CD4-positive, alpha-beta T cell (primary cell): ENCODE measurements at regions of chrX and their contacts with region 1.

Region 1: GRCh38 chrX:153507484-153508178 is 9.8 kb upstream of the ATP2B3 start:
- DNase-seq: peak; percentile 73 to 89 (median 80)
- ATAC-seq: peak; percentile 100
- H3K4me3 ChIP-seq: no peak overlapping the region
- H3K4me3 Mint-ChIP-seq: no peak overlapping the region
- H3K27ac ChIP-seq: no peak overlapping the region
- H3K27ac Mint-ChIP-seq: no peak overlapping the region
- H3K4me1 ChIP-seq: peaks cover 9% of the 10 kb centered on the region
- H3K4me1 Mint-ChIP-seq: no peaks in the 10 kb centered on the region
- H3K27me3 ChIP-seq: no peaks in the 10 kb centered on the region
- H3K27me3 Mint-ChIP-seq: no peaks in the 10 kb centered on the region
- CTCF ChIP-seq: peak; percentile 66

Region 2: GRCh38 chrX:153032397-153033118 is 475.1 kb before region 1 on chrX:
- CTCF ChIA-PET with region 1: interaction called, 12 read pairs
- POLR2A ChIA-PET with region 1: no interaction called
- intact Hi-C with region 1: loop called (anchors 1 to 2 kb)
- DNase-seq: peak; percentile 18 to 84 (median 58)
- ATAC-seq: peak; percentile 72
- H3K4me3 ChIP-seq: peak overlapping the region; percentile 59
- H3K4me3 Mint-ChIP-seq: peak overlapping the region; percentile 84
- H3K27ac ChIP-seq: peak overlapping the region in 1 of 2 donors; percentile 29
- H3K27ac Mint-ChIP-seq: peak overlapping the region; percentile 80
- H3K4me1 ChIP-seq: peaks cover 25% of the 10 kb centered on the region
- H3K4me1 Mint-ChIP-seq: peaks cover 5% of the 10 kb centered on the region
- H3K27me3 ChIP-seq: no peaks in the 10 kb centered on the region
- H3K27me3 Mint-ChIP-seq: no peaks in the 10 kb centered on the region
- CTCF ChIP-seq: peak; percentile 70

Region 3: DNA sequence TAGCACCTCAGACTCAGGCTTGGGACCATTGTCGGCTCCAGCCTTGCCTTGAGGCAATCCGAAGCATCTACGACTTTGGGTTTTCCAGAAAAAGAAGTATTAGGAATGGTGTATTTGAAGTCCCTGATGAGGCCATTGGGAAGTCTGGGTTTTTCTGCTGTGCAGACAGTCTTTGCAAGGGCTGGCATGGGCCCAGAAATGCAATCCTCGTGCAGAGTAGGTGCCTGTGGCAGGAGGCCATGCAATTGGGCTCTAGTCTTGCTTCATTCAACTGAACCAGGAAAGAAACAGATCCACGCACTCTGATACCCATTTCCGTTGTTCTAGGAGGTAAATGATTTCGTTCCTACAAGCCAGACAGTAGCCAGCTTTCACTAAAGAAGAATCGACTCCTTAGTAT is 84.0 kb before region 1 on chrX:
- CTCF ChIA-PET with region 1: no interaction called
- POLR2A ChIA-PET with region 1: no interaction called
- intact Hi-C with region 1: no loop called
- DNase-seq: no peak
- ATAC-seq: no peak
- H3K4me3 ChIP-seq: no peak overlapping the region
- H3K4me3 Mint-ChIP-seq: no peak overlapping the region
- H3K27ac ChIP-seq: no peak overlapping the region
- H3K27ac Mint-ChIP-seq: no peak overlapping the region
- H3K4me1 ChIP-seq: no peaks in the 10 kb centered on the region
- H3K4me1 Mint-ChIP-seq: no peaks in the 10 kb centered on the region
- H3K27me3 ChIP-seq: no peaks in the 10 kb centered on the region
- H3K27me3 Mint-ChIP-seq: no peaks in the 10 kb centered on the region
- CTCF ChIP-seq: no peak

Region 4: GRCh38 chrX:153460845-153461244 is 46.8 kb before region 1 on chrX:
- CTCF ChIA-PET with region 1: interaction called, 7 read pairs
- POLR2A ChIA-PET with region 1: no interaction called
- intact Hi-C with region 1: loop called in 1 of 2 experiments (anchors 2 kb)
- DNase-seq: peak in 13 of 14 experiments; percentile 35 to 68 (median 44)
- ATAC-seq: peak; percentile 44
- H3K4me3 ChIP-seq: no peak overlapping the region
- H3K4me3 Mint-ChIP-seq: no peak overlapping the region
- H3K27ac ChIP-seq: no peak overlapping the region
- H3K27ac Mint-ChIP-seq: no peak overlapping the region
- H3K4me1 ChIP-seq: no peaks in the 10 kb centered on the region
- H3K4me1 Mint-ChIP-seq: no peaks in the 10 kb centered on the region
- H3K27me3 ChIP-seq: no peaks in the 10 kb centered on the region
- H3K27me3 Mint-ChIP-seq: no peaks in the 10 kb centered on the region
- CTCF ChIP-seq: peak; percentile 48

Region 5: GRCh38 chrX:153470435-153471363 is 36.9 kb before region 1 on chrX and contains the start of gene HAUS7:
- CTCF ChIA-PET with region 1: interaction called, 28 read pairs
- POLR2A ChIA-PET with region 1: no interaction called
- intact Hi-C with region 1: loop called (anchors 1 kb)
- DNase-seq: peak; percentile 81 to 95 (median 86)
- ATAC-seq: peak; percentile 83
- H3K4me3 ChIP-seq: peak within 1 kb of the TSS; percentile 75
- H3K4me3 Mint-ChIP-seq: peak within 1 kb of the TSS; percentile 87
- H3K27ac ChIP-seq: peak within 1 kb of the TSS; percentile 29 to 46
- H3K27ac Mint-ChIP-seq: peak within 1 kb of the TSS; percentile 84
- H3K4me1 ChIP-seq: peaks cover 40% of the 10 kb centered on the region
- H3K4me1 Mint-ChIP-seq: peaks cover 6% of the 10 kb centered on the region
- H3K27me3 ChIP-seq: no peaks in the 10 kb centered on the region
- H3K27me3 Mint-ChIP-seq: no peaks in the 10 kb centered on the region
- CTCF ChIP-seq: peak; percentile 56
- total RNA-seq, gene HAUS7: 24.4 to 25.6 TPM

Region 6: DNA sequence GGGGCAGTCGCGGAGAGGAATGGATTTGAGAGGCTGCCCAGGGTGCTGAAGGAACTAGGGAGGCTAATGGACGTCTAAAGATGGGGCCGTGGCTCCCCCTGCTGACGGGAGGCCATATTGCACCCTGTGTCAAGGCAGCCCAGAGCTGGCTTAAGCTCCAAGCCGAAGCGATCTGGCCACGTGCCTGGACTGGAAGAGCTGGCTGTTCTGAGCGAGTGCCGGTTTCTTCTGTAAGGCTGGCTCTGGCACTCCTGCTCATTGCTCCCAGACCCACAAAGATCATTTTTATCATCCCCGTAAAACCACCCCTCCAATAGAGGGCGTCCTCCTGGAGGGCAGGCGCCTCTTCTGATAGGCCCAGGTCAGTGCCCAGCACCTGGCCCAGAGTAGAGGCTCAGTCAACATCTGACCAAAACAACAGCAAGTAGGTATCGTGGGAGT is 160.3 kb after region 1 on chrX:
- CTCF ChIA-PET with region 1: no interaction called
- POLR2A ChIA-PET with region 1: no interaction called
- intact Hi-C with region 1: no loop called
- DNase-seq: peak; percentile 55 to 85 (median 72)
- ATAC-seq: peak; percentile 90
- H3K4me3 ChIP-seq: peak overlapping the region; percentile 14
- H3K4me3 Mint-ChIP-seq: peak overlapping the region; percentile 54
- H3K27ac ChIP-seq: no peak overlapping the region
- H3K27ac Mint-ChIP-seq: no peak overlapping the region
- H3K4me1 ChIP-seq: peaks cover 15% of the 10 kb centered on the region
- H3K4me1 Mint-ChIP-seq: peaks cover 7% of the 10 kb centered on the region
- H3K27me3 ChIP-seq: peaks cover 0 to 2% of the 10 kb centered on the region in 2 experiments
- H3K27me3 Mint-ChIP-seq: peaks cover 8% of the 10 kb centered on the region
- CTCF ChIP-seq: peak; percentile 45